CD4-positive, alpha-beta T cell (primary cell): ENCODE measurements at regions of chr12 and their contacts with region 1.

Region 1: DNA sequence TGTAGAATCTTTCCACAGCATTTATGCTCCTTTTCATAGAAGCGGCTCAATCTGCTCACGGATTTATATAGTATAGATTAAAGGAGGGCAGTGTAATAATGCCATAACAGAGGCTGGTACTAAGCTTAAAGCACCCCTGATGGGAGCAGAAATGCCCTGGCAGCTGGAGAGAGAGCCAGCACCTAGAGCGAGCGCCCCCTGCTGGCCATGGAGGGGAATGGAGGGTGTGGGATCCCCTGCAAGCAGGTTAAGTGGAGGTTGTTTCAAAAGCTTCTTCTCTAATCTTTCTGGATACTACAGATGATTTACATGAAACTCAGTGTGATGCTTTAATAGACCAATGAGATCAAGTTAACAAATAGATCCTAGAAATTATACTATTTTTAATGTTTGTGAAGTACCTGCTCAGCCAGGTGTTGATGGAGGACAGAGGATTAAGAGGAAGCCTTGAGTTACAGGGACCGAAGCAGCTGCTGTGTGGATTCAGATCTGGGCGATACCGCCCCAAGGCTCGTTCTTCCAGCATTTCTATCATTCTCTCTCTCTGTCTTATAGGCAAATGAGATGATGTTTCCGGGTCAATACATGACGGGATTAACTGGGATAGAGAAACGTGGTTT is 1519.3 kb upstream of the TMEM132C start:
- DNase-seq: peak in 13 of 14 experiments; percentile 17 to 63 (median 35)
- ATAC-seq: peak; percentile 44
- H3K4me3 ChIP-seq: no peak overlapping the region
- H3K4me3 Mint-ChIP-seq: no peak overlapping the region
- H3K27ac ChIP-seq: no peak overlapping the region
- H3K27ac Mint-ChIP-seq: no peak overlapping the region
- H3K4me1 ChIP-seq: peaks cover 2% of the 10 kb centered on the region
- H3K4me1 Mint-ChIP-seq: peaks cover 4% of the 10 kb centered on the region
- H3K27me3 ChIP-seq: no peaks in the 10 kb centered on the region
- H3K27me3 Mint-ChIP-seq: no peaks in the 10 kb centered on the region
- CTCF ChIP-seq: peak; percentile 91

Region 2: GRCh38 chr12:126069549-126070165 is 678.0 kb before region 1 on chr12:
- CTCF ChIA-PET with region 1: no interaction called
- POLR2A ChIA-PET with region 1: no interaction called
- intact Hi-C with region 1: loop called in 1 of 2 experiments (anchors 5 kb)
- DNase-seq: peak in 8 of 14 experiments; percentile 0 to 40 (median 11)
- ATAC-seq: no peak
- H3K4me3 ChIP-seq: no peak overlapping the region
- H3K4me3 Mint-ChIP-seq: no peak overlapping the region
- H3K27ac ChIP-seq: no peak overlapping the region
- H3K27ac Mint-ChIP-seq: no peak overlapping the region
- H3K4me1 ChIP-seq: no peaks in the 10 kb centered on the region
- H3K4me1 Mint-ChIP-seq: no peaks in the 10 kb centered on the region
- H3K27me3 ChIP-seq: no peaks in the 10 kb centered on the region
- H3K27me3 Mint-ChIP-seq: no peaks in the 10 kb centered on the region
- CTCF ChIP-seq: no peak